PC-9 (cell line): ENCODE measurements at regions of chr5 and their contacts with region 1.

Region 1: GRCh38 chr5:13591621-13592020 is 352.9 kb downstream of the DNAH5 start:
- DNase-seq: peak in 1 of 2 experiments; percentile 25
- H3K4me3 ChIP-seq: no peak overlapping the region
- H3K27ac ChIP-seq: no peak overlapping the region
- H3K4me1 ChIP-seq: peaks cover 4% of the 10 kb centered on the region; the same call in 1 of the 2 replicates
- H3K27me3 ChIP-seq: no peaks in the 10 kb centered on the region
- CTCF ChIP-seq: no peak

Region 2: DNA sequence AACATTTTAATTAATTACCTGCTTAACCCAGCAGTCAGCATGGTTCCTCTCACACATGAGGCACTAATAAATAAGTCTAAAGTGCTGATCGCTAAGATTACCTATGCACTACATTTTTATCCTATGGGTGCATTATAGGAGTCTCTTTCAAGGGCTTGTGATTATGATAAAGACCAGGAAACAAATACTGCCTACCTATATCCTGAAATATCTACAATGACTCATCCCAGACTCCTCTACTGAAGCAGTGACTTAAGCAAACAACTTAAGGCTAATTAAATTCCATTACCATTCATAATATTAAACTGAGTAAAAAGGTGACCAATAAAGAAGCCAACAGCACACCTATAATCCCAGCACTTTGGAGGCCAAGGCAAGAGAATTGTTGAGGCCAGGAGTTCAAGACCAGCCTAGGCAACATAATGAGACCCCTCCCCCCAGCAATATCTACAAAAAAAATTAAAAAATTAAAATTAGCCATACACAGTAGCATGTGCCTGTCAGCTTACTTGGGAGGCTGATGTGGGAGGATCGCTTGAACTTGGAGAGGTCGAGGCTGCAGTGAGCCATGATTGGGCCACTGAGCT is 14.5 kb after region 1 on chr5:
- CTCF ChIA-PET with region 1: no interaction called
- POLR2A ChIA-PET with region 1: no interaction called
- intact Hi-C with region 1: loop called (anchors 1 kb)
- DNase-seq: peak in 1 of 2 experiments; percentile 95
- H3K4me3 ChIP-seq: no peak overlapping the region
- H3K27ac ChIP-seq: peak overlapping the region; percentile 60
- H3K4me1 ChIP-seq: peaks cover 20% of the 10 kb centered on the region; the same call in 1 of the 2 replicates
- H3K27me3 ChIP-seq: no peaks in the 10 kb centered on the region
- CTCF ChIP-seq: no peak